ENCODE measurements at regions of chr4 and their contacts with region 1.

Region 1: GRCh38 chr4:185597532-185598188 is 62.4 kb upstream of the PDLIM3 start:
- DNase-seq: peak; percentile 84
- H3K4me3 ChIP-seq: no peak overlapping the region
- H3K27ac ChIP-seq: no peak overlapping the region
- H3K4me1 ChIP-seq: no peaks in the 10 kb centered on the region
- H3K27me3 ChIP-seq: no peaks in the 10 kb centered on the region
- CTCF ChIP-seq: peak; percentile 95 to 96
- POLR2A ChIP-seq: no peak

Region 2: DNA sequence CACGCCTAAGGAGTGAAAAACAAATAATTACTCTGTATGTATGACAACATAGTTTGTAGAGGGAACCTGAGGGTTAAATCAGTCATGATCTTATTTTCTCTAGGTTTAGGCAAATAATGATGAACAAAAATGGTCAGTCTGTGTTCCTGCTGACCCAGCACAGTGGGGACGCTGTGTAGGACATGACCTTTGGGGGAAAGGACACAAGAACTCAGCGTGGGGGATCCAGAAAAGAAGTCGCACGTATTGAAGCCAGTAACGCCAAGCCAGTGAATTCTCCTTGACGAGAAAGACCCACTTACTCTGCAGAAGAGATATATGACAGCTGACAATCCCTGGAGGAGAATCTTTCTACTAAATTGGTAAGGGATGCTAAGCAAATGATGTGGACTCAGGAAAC is 542.8 kb before region 1 on chr4:
- CTCF ChIA-PET with region 1: no interaction called
- POLR2A ChIA-PET with region 1: no interaction called
- dilution Hi-C with region 1: no loop called
- intact Hi-C with region 1: no loop called
- DNase-seq: no peak
- H3K4me3 ChIP-seq: no peak overlapping the region
- H3K27ac ChIP-seq: no peak overlapping the region
- H3K4me1 ChIP-seq: no peaks in the 10 kb centered on the region
- H3K27me3 ChIP-seq: peaks cover 0 to 5% of the 10 kb centered on the region in 2 experiments
- CTCF ChIP-seq: no peak
- POLR2A ChIP-seq: no peak

Region 3: DNA sequence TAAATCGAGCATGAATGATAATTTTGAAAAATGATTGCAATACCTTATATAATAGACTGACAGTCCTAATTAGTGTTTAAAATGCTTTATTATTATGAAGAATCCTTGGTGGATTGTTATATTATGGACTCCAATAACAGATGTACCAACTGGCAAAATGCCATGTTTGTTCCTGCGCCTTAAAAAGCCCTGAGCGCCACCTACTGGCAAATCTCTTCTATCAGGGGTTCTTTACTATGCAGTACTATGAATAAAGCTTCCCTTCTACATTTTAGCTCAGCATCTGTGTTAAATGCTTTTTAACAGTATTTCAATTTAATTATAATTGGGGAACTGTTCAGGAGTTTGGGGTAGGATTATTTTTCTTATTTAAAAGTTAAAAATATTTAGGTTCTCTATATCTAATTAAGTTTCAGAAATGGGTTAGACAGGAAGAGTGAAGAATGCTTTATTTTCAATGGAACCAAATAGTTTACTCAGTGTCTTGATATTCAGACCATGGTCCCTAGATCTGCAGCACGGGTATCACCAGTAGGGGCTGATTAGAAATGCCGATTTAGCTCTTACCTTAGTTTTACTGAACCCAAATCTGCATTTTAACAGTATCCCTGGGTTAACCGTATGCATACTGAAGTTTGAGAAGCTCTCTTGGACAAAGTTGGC is 413.9 kb before region 1 on chr4:
- CTCF ChIA-PET with region 1: interaction called, 12 read pairs
- POLR2A ChIA-PET with region 1: no interaction called
- dilution Hi-C with region 1: no loop called
- intact Hi-C with region 1: no loop called
- DNase-seq: peak; percentile 82
- H3K4me3 ChIP-seq: no peak overlapping the region
- H3K27ac ChIP-seq: no peak overlapping the region
- H3K4me1 ChIP-seq: no peaks in the 10 kb centered on the region
- H3K27me3 ChIP-seq: no peaks in the 10 kb centered on the region
- CTCF ChIP-seq: peak; percentile 71 to 80
- POLR2A ChIP-seq: no peak

Region 4: DNA sequence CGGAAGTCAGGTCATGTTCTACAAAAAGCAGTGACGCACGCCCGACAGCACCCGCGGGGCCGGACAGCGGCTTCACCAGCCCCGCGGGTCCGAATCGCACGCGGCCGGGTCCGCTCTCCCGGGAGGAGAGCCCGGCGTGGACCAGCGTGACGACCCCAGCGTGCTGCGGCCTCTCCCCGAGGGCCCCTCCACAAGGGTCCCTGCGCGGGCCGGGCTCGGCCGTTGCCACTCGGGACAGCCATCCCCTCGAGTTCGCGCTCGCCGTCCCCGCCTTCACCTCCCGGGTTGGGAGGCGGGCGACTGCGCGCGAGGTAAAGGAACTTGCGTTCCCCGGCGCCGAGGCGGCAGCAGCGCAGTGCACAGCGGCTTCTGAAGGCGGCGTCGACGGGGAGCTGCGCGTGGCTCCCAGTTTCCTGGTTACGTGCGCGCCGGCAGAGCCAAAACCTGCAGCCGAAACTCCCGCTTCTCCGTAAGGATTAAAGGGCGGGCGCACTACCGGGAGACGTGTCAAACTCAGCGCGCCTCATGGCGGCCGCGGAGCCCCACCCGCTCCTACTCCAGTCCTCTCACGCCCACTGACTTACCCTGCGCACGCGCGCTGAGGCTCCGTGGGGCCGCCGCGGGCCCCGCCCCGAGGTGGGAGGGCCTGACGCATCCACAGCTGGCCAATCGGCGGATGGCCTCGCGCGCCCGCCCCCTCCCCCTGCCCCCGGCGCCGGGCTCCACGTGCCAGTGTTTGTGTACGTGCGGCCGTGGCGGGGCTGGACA is 201.5 kb before region 1 on chr4:
- CTCF ChIA-PET with region 1: interaction called, 24 read pairs
- POLR2A ChIA-PET with region 1: no interaction called
- dilution Hi-C with region 1: no loop called
- intact Hi-C with region 1: loop called (anchors 1 kb)
- DNase-seq: peak; percentile 99
- H3K4me3 ChIP-seq: peak overlapping the region; percentile 54 to 90 (median 87)
- H3K27ac ChIP-seq: peak overlapping the region; percentile 96
- H3K4me1 ChIP-seq: peaks cover 37% of the 10 kb centered on the region
- H3K27me3 ChIP-seq: no peaks in the 10 kb centered on the region
- CTCF ChIP-seq: no peak
- POLR2A ChIP-seq: peak; percentile 59

Region 5: DNA sequence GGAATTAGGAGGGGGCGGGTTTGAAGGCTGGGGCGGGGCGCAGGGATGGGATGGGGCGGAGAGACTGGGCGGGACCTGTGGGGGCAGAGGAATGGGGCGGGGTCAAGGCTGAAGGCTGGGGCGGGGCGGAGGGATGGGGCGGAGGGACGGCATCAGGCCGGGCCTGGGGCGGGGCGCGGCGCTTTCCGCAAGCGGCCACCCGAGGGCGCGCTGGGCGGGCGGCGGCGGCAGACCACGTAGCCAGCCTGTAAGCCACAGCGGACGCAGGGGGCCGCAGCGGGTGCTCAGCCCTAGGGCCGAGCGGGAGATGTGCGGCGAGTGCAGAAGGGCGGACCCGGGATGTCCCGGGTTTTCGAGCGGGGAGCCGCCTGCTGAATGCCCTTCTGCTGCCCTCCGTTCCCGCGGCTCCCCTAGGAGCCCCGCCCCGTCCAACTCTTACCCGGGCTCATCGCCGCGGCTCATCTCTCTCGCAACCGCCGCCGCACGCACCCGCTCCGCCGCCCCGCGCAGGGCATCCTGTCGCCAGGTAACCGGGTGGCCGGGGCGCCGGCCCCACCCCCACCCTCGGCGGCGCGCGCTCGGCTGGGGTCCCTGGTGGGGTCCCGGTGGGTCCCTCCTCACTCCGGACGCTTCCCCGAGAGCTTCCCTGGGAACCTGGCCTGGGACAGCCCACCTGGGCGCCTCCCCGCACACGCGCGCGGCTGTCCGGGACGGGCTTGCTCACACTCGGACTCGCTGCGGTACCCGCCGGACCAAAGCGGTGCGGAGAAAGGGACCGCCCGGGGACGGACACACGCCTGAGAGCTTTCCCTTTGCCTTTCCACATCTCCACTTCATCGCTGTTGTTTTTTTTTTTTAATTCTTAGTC is 126.2 kb before region 1 on chr4 and contains the start of gene CCDC110:
- CTCF ChIA-PET with region 1: interaction called, 107 read pairs
- POLR2A ChIA-PET with region 1: no interaction called
- dilution Hi-C with region 1: no loop called
- intact Hi-C with region 1: loop called (anchors 1 kb)
- DNase-seq: peak; percentile 90
- H3K4me3 ChIP-seq: peak within 1 kb of the TSS; percentile 43 to 80 (median 57)
- H3K27ac ChIP-seq: peak within 1 kb of the TSS; percentile 41
- H3K4me1 ChIP-seq: peaks cover 8% of the 10 kb centered on the region
- H3K27me3 ChIP-seq: peaks cover 15% of the 10 kb centered on the region in 2 experiments
- CTCF ChIP-seq: peak; percentile 32 to 57
- POLR2A ChIP-seq: no peak
- total RNA-seq, gene CCDC110: 0.28 and 0.71 TPM in 2 replicates

Region 6: GRCh38 chr4:185542626-185543315 is 54.9 kb before region 1 on chr4:
- CTCF ChIA-PET with region 1: interaction called, 10 read pairs
- POLR2A ChIA-PET with region 1: no interaction called
- dilution Hi-C with region 1: no loop called
- intact Hi-C with region 1: no loop called
- DNase-seq: no peak
- H3K4me3 ChIP-seq: no peak overlapping the region
- H3K27ac ChIP-seq: no peak overlapping the region
- H3K4me1 ChIP-seq: no peaks in the 10 kb centered on the region
- H3K27me3 ChIP-seq: peaks cover 0 to 7% of the 10 kb centered on the region in 2 experiments
- CTCF ChIP-seq: no peak
- POLR2A ChIP-seq: no peak

Region 7: DNA sequence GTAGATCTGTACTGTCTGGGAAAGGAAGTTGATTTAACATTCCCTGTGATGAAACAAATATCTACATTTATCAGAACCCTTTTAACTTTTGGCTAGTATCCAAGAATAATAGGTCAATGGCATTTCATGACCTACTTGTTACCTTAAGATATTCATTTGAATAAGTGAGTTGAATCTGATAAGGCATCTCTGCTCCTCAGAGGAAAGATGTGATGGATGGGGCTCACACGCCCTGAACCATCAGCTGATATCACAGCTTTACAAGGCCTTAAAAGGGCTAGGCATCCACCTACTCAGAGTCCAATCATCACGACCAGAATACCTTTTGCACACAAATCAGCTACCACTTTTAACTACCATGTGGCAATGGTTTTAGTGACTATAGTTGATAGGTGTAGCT is 27.8 kb after region 1 on chr4:
- CTCF ChIA-PET with region 1: interaction called, 10 read pairs
- POLR2A ChIA-PET with region 1: no interaction called
- dilution Hi-C with region 1: no loop called
- intact Hi-C with region 1: no loop called
- DNase-seq: peak; percentile 7
- H3K4me3 ChIP-seq: no peak overlapping the region
- H3K27ac ChIP-seq: no peak overlapping the region
- H3K4me1 ChIP-seq: no peaks in the 10 kb centered on the region
- H3K27me3 ChIP-seq: no peaks in the 10 kb centered on the region
- CTCF ChIP-seq: no peak
- POLR2A ChIP-seq: no peak

Region 8: DNA sequence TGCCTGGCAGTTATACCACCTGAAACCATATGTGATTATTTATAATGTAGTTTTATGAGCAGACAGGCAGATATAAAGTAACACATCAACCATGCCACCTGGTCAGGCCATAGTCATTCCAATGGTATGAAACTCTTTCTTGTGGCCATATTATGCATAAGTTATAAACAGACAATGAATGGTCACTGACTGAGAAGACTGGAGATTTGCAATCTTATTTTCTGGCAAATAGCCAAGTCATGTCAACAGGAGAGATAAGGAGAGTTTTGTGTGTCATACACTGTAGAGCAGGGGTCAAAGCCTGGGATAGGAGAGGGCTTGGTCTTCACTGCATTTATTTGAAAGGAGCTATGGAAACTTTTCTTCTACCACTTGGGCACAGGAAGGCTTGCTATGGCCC is 184.9 kb after region 1 on chr4:
- CTCF ChIA-PET with region 1: no interaction called
- POLR2A ChIA-PET with region 1: no interaction called
- dilution Hi-C with region 1: no loop called
- intact Hi-C with region 1: no loop called
- DNase-seq: peak; percentile 58
- H3K4me3 ChIP-seq: no peak overlapping the region
- H3K27ac ChIP-seq: peak overlapping the region; percentile 30
- H3K4me1 ChIP-seq: peaks cover 46% of the 10 kb centered on the region
- H3K27me3 ChIP-seq: no peaks in the 10 kb centered on the region
- CTCF ChIP-seq: no peak
- POLR2A ChIP-seq: no peak

Measured in endothelial cell of umbilical vein (primary cell).